IMR-90 (cell line): ENCODE measurements at regions of chr19 and their contacts with region 1.

Region 1: DNA sequence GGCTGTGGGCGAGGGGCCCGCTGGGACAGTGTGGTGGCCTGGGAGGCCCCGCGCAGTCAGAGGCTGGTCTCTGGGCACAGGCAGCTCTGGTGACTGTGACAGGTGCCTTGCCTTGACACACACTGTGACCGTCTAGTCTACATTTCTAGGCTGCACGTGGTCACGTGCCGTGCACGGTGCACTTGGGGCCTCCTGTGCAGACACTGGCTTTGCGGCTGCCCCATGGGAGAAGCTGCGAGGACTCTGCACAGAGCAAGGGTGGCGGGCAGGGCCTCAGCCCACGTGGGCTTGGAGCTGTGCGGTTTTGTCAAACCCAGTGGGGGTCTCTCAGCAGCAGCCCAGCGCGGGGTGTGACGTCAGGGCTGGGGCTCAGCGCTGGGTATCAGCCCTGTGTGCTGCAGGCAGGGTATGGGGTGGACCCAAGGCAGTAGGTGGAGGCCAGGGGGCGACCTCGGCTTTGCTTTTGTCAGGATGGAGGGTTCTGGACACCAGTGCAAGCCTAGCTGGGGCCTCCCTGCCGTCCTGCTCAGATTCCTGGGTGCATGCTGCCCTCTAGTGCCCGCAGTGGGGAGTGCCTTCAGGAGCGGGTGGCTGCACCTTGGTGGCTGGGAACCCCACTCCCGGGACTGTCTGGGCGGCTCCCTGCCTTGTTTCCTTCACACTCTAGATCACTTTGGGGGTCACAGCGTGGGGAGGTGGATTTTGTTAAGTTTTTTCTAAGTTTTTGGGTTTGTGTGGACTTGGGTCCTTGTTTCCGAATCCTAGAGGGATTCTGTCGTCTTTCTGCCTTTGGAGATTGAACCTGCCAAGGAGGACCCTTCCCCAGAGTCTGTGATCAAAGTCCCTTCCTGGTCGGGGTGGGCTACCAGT is 62.6 kb downstream of the KDM4B start:
- DNase-seq: peak; percentile 65
- ATAC-seq: peak; percentile 96
- H3K4me3 ChIP-seq: no peak overlapping the region
- H3K27ac ChIP-seq: no peak overlapping the region
- H3K4me1 ChIP-seq: peaks cover 12% of the 10 kb centered on the region
- H3K27me3 ChIP-seq: no peaks in the 10 kb centered on the region
- CTCF ChIP-seq: peak; percentile 95
- POLR2A ChIP-seq: 0 out of 2 replicates have a peak, but pooled peaks have one; percentile 41
- RAD21 ChIP-seq: peak; percentile 96

Region 2: GRCh38 chr19:4803736-4804695 is 227.4 kb before region 1 on chr19:
- CTCF ChIA-PET with region 1: interaction called, 8 read pairs
- POLR2A ChIA-PET with region 1: no interaction called
- dilution Hi-C with region 1: no loop called
- in situ Hi-C with region 1: loop called (anchors 5 kb)
- intact Hi-C with region 1: loop called (anchors 1 kb)
- DNase-seq: peak; percentile 37
- ATAC-seq: peak; percentile 93
- H3K4me3 ChIP-seq: no peak overlapping the region
- H3K27ac ChIP-seq: no peak overlapping the region
- H3K4me1 ChIP-seq: no peaks in the 10 kb centered on the region
- H3K27me3 ChIP-seq: no peaks in the 10 kb centered on the region
- CTCF ChIP-seq: peak; percentile 91
- POLR2A ChIP-seq: no peak
- RAD21 ChIP-seq: peak; percentile 73

Region 3: GRCh38 chr19:4867534-4868285 is 163.8 kb before region 1 on chr19 and contains the start of gene PLIN3:
- CTCF ChIA-PET with region 1: no interaction called
- POLR2A ChIA-PET with region 1: no interaction called
- dilution Hi-C with region 1: no loop called
- in situ Hi-C with region 1: loop called (anchors 5 kb)
- intact Hi-C with region 1: loop called (anchors 1 kb)
- DNase-seq: peak; percentile 93
- ATAC-seq: peak; percentile 95
- H3K4me3 ChIP-seq: peak within 1 kb of the TSS; percentile 76
- H3K27ac ChIP-seq: peak within 1 kb of the TSS; percentile 82
- H3K4me1 ChIP-seq: no peaks in the 10 kb centered on the region
- H3K27me3 ChIP-seq: no peaks in the 10 kb centered on the region
- CTCF ChIP-seq: no peak
- POLR2A ChIP-seq: no peak
- RAD21 ChIP-seq: no peak
- total RNA-seq, gene PLIN3: 246 and 289 TPM in 2 replicates

Region 4: DNA sequence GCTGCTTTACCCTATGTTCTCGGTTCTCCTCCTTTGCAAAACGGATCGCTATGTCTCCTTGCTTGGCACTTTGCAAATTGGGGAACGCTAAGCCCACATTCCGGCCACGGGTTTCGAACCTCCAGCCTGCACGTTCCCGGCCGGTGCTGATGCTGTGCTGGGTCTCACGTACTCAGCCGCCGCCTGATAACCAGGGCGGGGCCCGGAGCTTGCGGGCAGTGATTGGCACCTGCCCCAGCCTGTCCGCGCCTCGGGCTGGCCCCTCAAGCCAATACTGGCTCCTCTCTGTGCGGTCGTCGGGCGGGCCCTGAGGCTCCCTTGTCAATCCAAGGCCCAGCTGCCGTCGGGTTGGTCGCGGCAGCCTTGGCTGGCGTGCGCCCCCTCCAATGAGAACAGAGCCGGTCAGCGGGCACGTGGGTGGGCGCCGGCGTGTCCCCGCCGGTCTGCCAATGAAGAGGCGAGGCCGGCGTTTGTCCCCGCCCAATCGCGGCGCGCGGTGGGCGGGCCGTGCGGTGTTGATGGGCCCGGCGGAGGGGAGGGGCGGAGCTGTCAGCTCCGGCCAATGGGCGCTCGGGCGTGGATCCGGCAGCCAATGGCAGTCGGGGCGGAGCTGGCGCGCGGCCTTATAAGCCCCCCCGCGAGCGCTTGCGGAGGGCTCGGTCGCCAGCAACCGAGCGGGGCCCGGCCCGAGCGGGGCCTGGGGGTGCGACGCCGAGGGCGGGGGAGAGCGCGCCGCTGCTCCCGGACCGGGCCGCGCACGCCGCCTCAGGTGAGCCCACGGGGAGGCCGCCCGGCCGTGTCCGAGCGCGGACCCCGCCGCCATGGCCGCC is 62.8 kb before region 1 on chr19 and contains the start of gene KDM4B:
- CTCF ChIA-PET with region 1: no interaction called
- POLR2A ChIA-PET with region 1: no interaction called
- dilution Hi-C with region 1: no loop called
- in situ Hi-C with region 1: no loop called
- intact Hi-C with region 1: loop called (anchors 1 kb)
- DNase-seq: peak; percentile 99
- ATAC-seq: peak; percentile 93
- H3K4me3 ChIP-seq: peak within 1 kb of the TSS; percentile 73
- H3K27ac ChIP-seq: peak within 1 kb of the TSS; percentile 90
- H3K4me1 ChIP-seq: peaks cover 20% of the 10 kb centered on the region
- H3K27me3 ChIP-seq: no peaks in the 10 kb centered on the region
- CTCF ChIP-seq: no peak
- POLR2A ChIP-seq: peak; percentile 99
- RAD21 ChIP-seq: no peak
- total RNA-seq, gene KDM4B: 5.0 TPM in 2 replicates